Lower leg skin (tissue), 4 donors: ENCODE measurements at regions of chr10 and their contacts with region 1.

Region 1: DNA sequence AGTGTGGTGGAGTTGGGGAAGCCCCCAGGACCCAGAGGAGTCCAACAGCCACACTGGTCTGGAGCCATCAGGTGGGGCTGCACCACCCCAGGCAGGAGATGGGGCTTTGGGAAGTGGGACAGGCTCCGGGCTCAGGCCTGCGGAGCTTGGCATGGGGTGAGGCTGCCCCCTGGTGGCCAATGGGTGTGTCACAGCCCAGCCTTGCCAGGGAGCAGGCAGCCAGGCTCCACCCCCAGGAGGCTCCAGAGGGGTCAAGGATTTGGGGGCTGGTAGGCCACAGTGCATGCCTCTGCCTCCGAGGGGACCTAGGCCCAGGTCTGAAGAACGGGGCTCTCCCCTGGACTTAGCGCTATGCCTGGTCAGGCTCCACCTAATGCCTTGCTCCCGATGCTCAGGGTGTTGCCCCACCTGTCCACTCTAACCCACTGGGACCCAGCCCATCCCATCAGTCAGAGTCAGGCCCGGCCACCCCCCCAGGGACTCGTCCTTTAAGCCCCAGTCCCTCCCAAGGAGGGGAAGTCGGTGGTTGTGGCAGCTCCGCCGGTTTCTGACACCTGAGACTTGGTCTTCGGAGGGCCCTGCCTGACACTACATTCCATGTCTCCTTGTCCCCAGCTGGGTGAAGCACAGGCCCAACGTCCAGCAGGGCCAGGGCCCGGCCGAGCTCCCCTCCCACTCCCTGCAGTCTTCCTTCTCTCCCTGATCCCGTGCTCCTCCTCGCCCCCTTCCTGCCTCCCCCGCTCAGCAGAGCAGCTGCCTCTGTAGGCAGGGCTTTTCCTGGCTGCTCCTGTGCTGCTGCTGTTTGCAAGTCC is 11.3 kb upstream of the SAMD8 start:
- DNase-seq: peak; percentile 54 to 95
- H3K4me3 ChIP-seq: no peak overlapping the region
- CTCF ChIP-seq: peak in 2 of 3 donors; percentile 43 to 88
- POLR2A ChIP-seq: no peak

Region 2: DNA sequence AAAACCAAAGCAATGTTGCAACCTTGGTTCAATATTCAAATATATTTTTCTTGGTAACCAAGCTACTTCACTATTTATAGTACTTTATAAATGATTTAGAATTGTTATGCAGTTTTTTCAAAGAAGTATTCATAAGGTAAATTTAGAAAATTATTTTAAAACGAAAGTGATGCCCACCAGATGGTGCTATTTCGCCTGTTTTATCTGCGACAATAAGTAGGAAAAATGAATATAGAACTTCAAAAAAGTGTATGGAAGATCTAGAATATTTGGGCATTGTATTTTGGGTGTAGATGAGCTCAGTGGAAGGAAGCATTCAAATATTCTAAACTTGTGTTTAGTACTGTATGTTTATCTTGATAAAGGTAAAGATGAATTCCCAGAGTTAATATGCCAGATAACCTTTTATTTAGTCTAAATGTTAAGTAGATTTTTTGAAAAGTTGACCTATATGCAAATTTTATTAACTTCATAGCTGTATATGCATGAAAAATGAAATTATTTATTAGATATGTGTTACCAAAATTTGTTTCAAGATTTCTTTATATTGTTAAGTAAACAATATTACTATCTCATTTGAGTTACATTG is 856.0 kb before region 1 on chr10:
- intact Hi-C with region 1: loop called (anchors 5 kb)
- DNase-seq: no peak
- H3K4me3 ChIP-seq: no peak overlapping the region
- CTCF ChIP-seq: no peak
- POLR2A ChIP-seq: no peak

Region 3: DNA sequence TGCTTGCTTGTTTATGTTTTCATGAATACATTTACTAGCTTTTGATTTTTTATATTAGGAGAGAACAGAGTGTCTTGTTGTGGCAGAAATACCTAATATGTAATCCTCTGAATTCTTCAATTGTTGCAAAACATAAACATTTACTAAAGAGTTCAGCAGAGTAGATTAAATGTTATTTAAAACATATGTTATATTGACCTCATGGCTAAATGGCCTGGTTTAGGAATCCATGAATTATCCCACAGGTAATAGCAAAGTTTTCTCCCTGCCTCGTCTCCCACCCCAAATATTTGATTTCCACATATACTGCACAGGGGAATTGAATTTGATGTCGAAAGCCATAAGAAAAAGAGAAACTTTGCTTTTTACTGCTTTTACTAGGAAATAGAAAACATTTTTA is 837.3 kb before region 1 on chr10:
- intact Hi-C with region 1: loop called (anchors 10 kb)
- DNase-seq: no peak
- H3K4me3 ChIP-seq: no peak overlapping the region
- CTCF ChIP-seq: no peak
- POLR2A ChIP-seq: no peak